MCF 10A (cell line): ENCODE measurements at regions of chr21 and their contacts with region 1.

Region 1: DNA sequence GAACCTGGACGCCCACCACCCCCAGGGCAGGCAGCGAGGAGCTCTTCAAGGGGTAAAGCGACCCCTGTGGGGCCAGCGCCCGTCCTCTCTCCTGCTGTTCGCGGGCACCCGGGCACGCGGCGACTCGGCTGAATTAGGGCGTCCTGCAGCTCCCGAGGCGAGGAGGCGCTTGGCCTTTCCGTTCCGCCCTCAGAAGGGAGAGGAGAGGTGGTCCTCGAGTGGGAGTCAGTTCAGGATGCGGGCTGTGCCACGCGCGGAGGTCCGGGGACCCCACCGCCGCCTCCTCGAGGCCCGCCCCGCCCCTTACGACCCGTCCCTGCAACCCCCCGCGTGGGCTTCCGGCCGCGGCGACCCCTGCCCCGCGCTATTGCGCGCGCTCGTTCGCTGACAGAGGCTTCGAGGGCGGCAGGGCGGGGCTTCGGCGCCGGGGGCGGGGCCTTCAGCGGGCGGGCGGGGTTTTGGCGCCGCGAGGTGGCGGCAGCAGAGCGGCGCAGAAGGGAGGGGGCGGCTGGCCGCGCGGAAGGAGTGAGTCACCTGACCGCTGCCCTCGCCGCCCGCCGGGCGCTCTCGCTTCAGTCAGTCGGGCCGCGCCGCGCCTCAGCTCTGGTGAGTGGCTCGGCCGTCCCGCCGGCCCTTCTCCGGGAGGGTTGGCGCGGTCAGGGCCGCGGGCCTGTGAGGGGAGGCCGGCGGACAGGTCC is at the start of gene BACH1:
- DNase-seq: peak; percentile 88
- H3K4me3 Mint-ChIP-seq: peak within 1 kb of the TSS; percentile 81
- H3K27ac Mint-ChIP-seq: peak within 1 kb of the TSS; percentile 61
- H3K4me1 Mint-ChIP-seq: peaks cover 38% of the 10 kb centered on the region
- H3K27me3 Mint-ChIP-seq: no peaks in the 10 kb centered on the region
- CTCF ChIP-seq: peak; percentile 35
- total RNA-seq, gene BACH1: 69.3 and 76.6 TPM in 2 replicates

Region 2: GRCh38 chr21:29073222-29074006 is 225.1 kb before region 1 on chr21 and contains the start of gene CCT8:
- CTCF ChIA-PET with region 1: no interaction called
- POLR2A ChIA-PET with region 1: interaction called, 84 read pairs
- intact Hi-C with region 1: no loop called
- DNase-seq: peak; percentile 99
- H3K4me3 Mint-ChIP-seq: peak within 1 kb of the TSS; percentile 100
- H3K27ac Mint-ChIP-seq: peak within 1 kb of the TSS; percentile 100
- H3K4me1 Mint-ChIP-seq: peaks cover 22% of the 10 kb centered on the region
- H3K27me3 Mint-ChIP-seq: no peaks in the 10 kb centered on the region
- CTCF ChIP-seq: no peak
- total RNA-seq, gene CCT8: 174 and 221 TPM in 2 replicates

Region 3: DNA sequence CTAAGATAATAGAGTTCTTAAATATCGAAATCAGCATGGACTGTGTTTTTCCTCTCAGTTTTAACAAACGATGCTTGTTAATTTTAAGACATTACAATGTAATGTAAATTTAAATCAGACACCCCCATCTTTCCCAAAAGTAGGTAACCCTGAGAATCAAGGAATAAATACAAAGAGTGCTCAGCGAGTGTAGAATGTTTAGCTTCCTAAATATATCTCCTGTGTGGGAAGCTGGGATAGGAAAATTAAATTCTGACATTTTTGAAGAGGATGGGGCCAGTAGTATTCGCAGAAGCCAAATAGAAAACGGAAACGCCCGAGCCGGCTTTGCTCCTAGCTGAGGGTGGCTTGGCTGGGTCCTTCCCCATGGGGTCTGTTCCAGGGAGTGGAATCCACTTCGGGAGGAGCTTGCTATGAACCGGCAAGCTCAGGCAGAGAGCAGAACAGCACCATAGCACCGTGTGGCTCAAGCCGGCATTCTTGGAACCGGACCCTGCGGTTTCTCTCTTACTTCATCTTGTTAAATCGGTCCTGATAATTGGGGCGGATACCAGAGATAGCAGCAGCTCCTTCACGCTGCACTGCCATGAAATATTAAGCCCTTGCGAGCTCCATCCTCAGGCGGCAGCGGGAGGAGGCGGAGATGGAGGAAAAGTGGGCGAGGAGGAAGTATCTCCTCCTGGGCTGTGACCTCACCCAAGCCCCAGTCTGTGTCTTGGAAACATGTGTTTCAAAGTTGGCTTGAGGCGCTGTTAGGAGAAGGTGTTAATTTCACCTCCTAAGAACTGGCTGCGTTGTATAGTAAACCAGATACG is 143.2 kb before region 1 on chr21:
- CTCF ChIA-PET with region 1: interaction called, 7 read pairs
- POLR2A ChIA-PET with region 1: interaction called, 64 read pairs
- intact Hi-C with region 1: no loop called
- DNase-seq: peak; percentile 52
- H3K4me3 Mint-ChIP-seq: peak overlapping the region; percentile 58
- H3K27ac Mint-ChIP-seq: peak overlapping the region; percentile 39
- H3K4me1 Mint-ChIP-seq: peaks cover 25% of the 10 kb centered on the region
- H3K27me3 Mint-ChIP-seq: no peaks in the 10 kb centered on the region
- CTCF ChIP-seq: no peak

Region 4: GRCh38 chr21:29181799-29182470 is 116.6 kb before region 1 on chr21:
- CTCF ChIA-PET with region 1: interaction called, 6 read pairs
- POLR2A ChIA-PET with region 1: interaction called, 126 read pairs
- intact Hi-C with region 1: no loop called
- DNase-seq: peak; percentile 78
- H3K4me3 Mint-ChIP-seq: peak overlapping the region; percentile 82
- H3K27ac Mint-ChIP-seq: peak overlapping the region; percentile 99
- H3K4me1 Mint-ChIP-seq: peaks cover 31% of the 10 kb centered on the region
- H3K27me3 Mint-ChIP-seq: no peaks in the 10 kb centered on the region
- CTCF ChIP-seq: no peak

Region 5: GRCh38 chr21:29232601-29233546 is 65.6 kb before region 1 on chr21:
- CTCF ChIA-PET with region 1: interaction called, 5 read pairs
- POLR2A ChIA-PET with region 1: interaction called, 35 read pairs
- intact Hi-C with region 1: loop called (anchors 10 kb)
- DNase-seq: peak; percentile 56
- H3K4me3 Mint-ChIP-seq: no peak overlapping the region
- H3K27ac Mint-ChIP-seq: peak overlapping the region; percentile 89
- H3K4me1 Mint-ChIP-seq: peaks cover 40% of the 10 kb centered on the region
- H3K27me3 Mint-ChIP-seq: no peaks in the 10 kb centered on the region
- CTCF ChIP-seq: no peak

Region 6: GRCh38 chr21:29287383-29287782 is 11.1 kb before region 1 on chr21:
- CTCF ChIA-PET with region 1: interaction called, 8 read pairs
- POLR2A ChIA-PET with region 1: interaction called, 29 read pairs
- intact Hi-C with region 1: no loop called
- DNase-seq: no peak
- H3K4me3 Mint-ChIP-seq: no peak overlapping the region
- H3K27ac Mint-ChIP-seq: no peak overlapping the region
- H3K4me1 Mint-ChIP-seq: peaks cover 17% of the 10 kb centered on the region
- H3K27me3 Mint-ChIP-seq: no peaks in the 10 kb centered on the region
- CTCF ChIP-seq: no peak

Region 7: GRCh38 chr21:29342363-29342957 is 44.0 kb after region 1 on chr21:
- CTCF ChIA-PET with region 1: interaction called, 9 read pairs
- POLR2A ChIA-PET with region 1: interaction called, 155 read pairs
- intact Hi-C with region 1: loop called (anchors 2 kb)
- DNase-seq: peak; percentile 94
- H3K4me3 Mint-ChIP-seq: peak overlapping the region; percentile 60
- H3K27ac Mint-ChIP-seq: peak overlapping the region; percentile 84
- H3K4me1 Mint-ChIP-seq: peaks cover 34% of the 10 kb centered on the region
- H3K27me3 Mint-ChIP-seq: no peaks in the 10 kb centered on the region
- CTCF ChIP-seq: no peak